Right ventricle myocardium inferior (tissue), 1 donor: ENCODE measurements at regions of chr6 and their contacts with region 1.

Region 1: GRCh38 chr6:80197474-80197873 is 91.0 kb downstream of the BCKDHB start:
- DNase-seq: no peak
- ATAC-seq: peak; percentile 89

Region 2: DNA sequence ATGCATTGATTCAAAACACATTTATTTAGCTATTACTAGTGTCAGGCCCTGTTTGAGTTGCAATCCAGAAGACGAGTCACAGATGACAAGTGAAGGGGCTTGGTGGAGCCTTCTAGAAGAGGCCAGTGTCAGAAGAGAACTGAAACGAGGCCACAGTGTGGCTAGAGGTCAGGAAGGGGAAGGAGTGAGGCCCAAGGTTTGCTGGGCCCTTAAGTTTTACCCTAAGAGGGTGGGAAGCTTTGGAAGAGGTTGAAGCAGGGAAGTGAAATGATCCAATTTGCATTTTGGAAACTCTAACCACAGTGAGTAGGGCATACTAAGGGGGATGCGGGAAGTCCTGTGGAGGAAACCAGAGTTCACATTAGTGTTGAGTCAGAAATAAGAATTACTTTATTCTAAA is 168.0 kb before region 1 on chr6:
- intact Hi-C with region 1: no loop called
- DNase-seq: no peak
- ATAC-seq: no peak

Region 3: GRCh38 chr6:80151635-80152034 is 45.8 kb before region 1 on chr6:
- intact Hi-C with region 1: loop called (anchors 5 kb)
- DNase-seq: no peak
- ATAC-seq: peak; percentile 77